IMR-90 (cell line): ENCODE measurements at regions of chr1 and their contacts with region 1.

Region 1: DNA sequence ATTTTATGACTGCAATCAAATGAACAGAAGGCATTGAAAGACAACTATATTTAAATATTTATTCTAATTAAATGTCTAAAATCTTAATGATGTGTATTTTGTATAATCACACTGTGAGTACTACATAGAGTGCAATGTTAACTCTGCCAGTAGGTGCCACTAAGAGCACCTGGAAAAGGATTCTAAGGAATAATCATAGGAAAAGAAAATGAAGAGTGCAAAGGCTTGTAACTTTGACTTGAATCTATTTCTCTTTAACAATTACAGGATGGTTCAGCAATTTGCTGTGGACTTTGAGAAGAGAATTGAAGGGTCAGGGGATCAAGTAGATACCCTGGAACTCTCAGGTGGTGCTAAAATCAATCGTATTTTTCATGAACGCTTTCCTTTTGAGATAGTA is 200.4 kb downstream of the DNM3 start:
- DNase-seq: peak; percentile 30
- ATAC-seq: peak; percentile 51; the same call in 1 of the 2 replicates
- H3K4me3 ChIP-seq: no peak overlapping the region
- H3K27ac ChIP-seq: no peak overlapping the region
- H3K4me1 ChIP-seq: peaks cover 2% of the 10 kb centered on the region
- H3K27me3 ChIP-seq: no peaks in the 10 kb centered on the region
- CTCF ChIP-seq: peak; percentile 61
- POLR2A ChIP-seq: no peak
- RAD21 ChIP-seq: peak; percentile 67

Region 2: GRCh38 chr1:172135076-172135672 is 93.4 kb after region 1 on chr1:
- CTCF ChIA-PET with region 1: no interaction called
- POLR2A ChIA-PET with region 1: no interaction called
- dilution Hi-C with region 1: no loop called
- in situ Hi-C with region 1: no loop called
- intact Hi-C with region 1: loop called (anchors 5 kb)
- DNase-seq: no peak
- ATAC-seq: no peak
- H3K4me3 ChIP-seq: no peak overlapping the region
- H3K27ac ChIP-seq: no peak overlapping the region
- H3K4me1 ChIP-seq: peaks cover 7% of the 10 kb centered on the region
- H3K27me3 ChIP-seq: no peaks in the 10 kb centered on the region
- CTCF ChIP-seq: peak; percentile 36
- POLR2A ChIP-seq: no peak
- RAD21 ChIP-seq: no peak; the same call in 1 of the 2 replicates

Region 3: GRCh38 chr1:172269644-172270043 is 227.9 kb after region 1 on chr1:
- CTCF ChIA-PET with region 1: no interaction called
- POLR2A ChIA-PET with region 1: no interaction called
- dilution Hi-C with region 1: no loop called
- in situ Hi-C with region 1: no loop called
- intact Hi-C with region 1: loop called (anchors 5 kb)
- DNase-seq: peak; percentile 66
- ATAC-seq: peak; percentile 74
- H3K4me3 ChIP-seq: no peak overlapping the region
- H3K27ac ChIP-seq: no peak overlapping the region
- H3K4me1 ChIP-seq: peaks cover 2% of the 10 kb centered on the region; the same call in 1 of the 2 replicates
- H3K27me3 ChIP-seq: no peaks in the 10 kb centered on the region
- CTCF ChIP-seq: no peak
- POLR2A ChIP-seq: no peak
- RAD21 ChIP-seq: no peak

Region 4: DNA sequence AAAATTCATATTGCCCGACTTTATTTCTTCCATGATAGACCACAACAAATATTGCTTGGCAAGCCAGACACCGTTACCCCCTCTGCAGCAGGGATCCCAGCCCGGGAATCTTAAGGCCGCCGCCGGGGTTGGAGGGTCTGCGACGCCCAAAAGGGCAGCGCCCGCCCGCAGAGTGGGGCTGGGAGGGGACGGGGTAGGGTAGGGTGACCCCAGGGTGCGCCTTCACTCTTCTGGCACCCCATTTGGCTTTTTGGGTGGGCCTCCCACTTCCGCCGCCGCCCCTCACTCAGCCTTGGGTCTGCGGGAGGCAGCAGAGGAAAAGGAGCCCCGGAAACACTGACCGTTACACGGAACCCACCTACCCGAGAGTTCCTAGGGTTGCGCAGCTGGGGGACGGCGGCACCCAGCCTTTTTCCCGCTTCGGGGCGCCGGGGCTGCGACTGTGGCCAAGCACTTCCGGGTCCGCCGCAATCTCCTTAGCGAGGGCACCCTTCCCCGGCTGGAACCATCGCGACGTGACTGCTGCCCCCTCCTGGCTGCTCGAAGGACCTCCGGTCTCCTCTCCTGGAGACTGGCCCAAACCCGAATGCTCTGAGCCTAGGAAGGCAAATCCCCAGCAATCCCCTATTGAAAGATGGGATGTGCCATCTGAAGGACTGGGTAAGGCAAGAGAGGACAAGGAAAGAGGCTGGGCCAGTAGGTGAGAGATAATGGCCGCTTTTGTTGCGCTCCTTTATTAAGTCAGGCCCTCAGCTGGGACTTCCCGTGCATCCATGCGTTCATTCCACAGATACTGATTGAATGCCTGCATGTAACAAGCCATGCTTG is 402.1 kb after region 1 on chr1 and contains the start of gene PIGC:
- CTCF ChIA-PET with region 1: no interaction called
- POLR2A ChIA-PET with region 1: no interaction called
- dilution Hi-C with region 1: no loop called
- in situ Hi-C with region 1: no loop called
- intact Hi-C with region 1: loop called (anchors 5 kb)
- DNase-seq: peak; percentile 79
- ATAC-seq: peak; percentile 99
- H3K4me3 ChIP-seq: peak within 1 kb of the TSS; percentile 90
- H3K27ac ChIP-seq: peak within 1 kb of the TSS; percentile 84
- H3K4me1 ChIP-seq: peaks cover 4% of the 10 kb centered on the region
- H3K27me3 ChIP-seq: no peaks in the 10 kb centered on the region
- CTCF ChIP-seq: peak; percentile 87
- POLR2A ChIP-seq: no peak
- RAD21 ChIP-seq: peak; percentile 75
- total RNA-seq, gene PIGC: 14.9 and 19.4 TPM in 2 replicates